B cell (primary cell): ENCODE measurements at regions of chr2 and their contacts with region 1.

Region 1: GRCh38 chr2:230552181-230552580 is 136.2 kb downstream of the SP100 start:
- DNase-seq: no peak
- ATAC-seq: no peak
- H3K4me3 ChIP-seq: no peak overlapping the region
- H3K4me3 Mint-ChIP-seq: no peak overlapping the region
- H3K27ac ChIP-seq: no peak overlapping the region
- H3K27ac Mint-ChIP-seq: peak overlapping the region; percentile 41
- H3K4me1 ChIP-seq: peaks cover 12% of the 10 kb centered on the region in 2 donors
- H3K4me1 Mint-ChIP-seq: peaks cover 24% of the 10 kb centered on the region
- H3K27me3 ChIP-seq: no peaks in the 10 kb centered on the region
- H3K27me3 Mint-ChIP-seq: no peaks in the 10 kb centered on the region
- CTCF ChIP-seq: no peak

Region 2: DNA sequence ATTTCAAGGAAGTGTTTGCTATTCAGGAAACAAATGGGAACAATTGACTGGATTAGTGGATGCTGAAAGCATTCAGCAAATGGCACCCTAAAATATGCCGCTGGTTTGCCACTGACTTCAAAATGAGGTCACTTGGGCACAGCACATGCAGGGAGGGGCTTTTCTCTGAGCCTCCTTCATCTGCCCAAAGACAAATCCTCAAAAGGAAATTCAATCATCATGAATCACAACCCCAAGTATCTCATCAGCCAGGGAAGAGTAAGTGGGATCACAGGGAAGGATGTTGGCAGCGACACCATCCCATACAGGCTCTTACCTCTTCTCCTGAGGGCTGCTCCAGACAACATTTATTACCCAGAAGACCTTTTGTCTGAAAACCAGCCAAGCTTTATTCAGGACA is 239.5 kb before region 1 on chr2:
- CTCF ChIA-PET with region 1: no interaction called
- POLR2A ChIA-PET with region 1: no interaction called
- intact Hi-C with region 1: no loop called
- DNase-seq: no peak
- ATAC-seq: no peak
- H3K4me3 ChIP-seq: no peak overlapping the region
- H3K4me3 Mint-ChIP-seq: no peak overlapping the region
- H3K27ac ChIP-seq: peak overlapping the region in 1 of 2 donors; percentile 17
- H3K27ac Mint-ChIP-seq: peak overlapping the region; percentile 32
- H3K4me1 ChIP-seq: peaks cover 6 to 20% of the 10 kb centered on the region in 2 donors
- H3K4me1 Mint-ChIP-seq: peaks cover 30% of the 10 kb centered on the region
- H3K27me3 ChIP-seq: no peaks in the 10 kb centered on the region
- H3K27me3 Mint-ChIP-seq: no peaks in the 10 kb centered on the region
- CTCF ChIP-seq: no peak

Region 3: GRCh38 chr2:230496891-230497290 is 55.3 kb before region 1 on chr2:
- CTCF ChIA-PET with region 1: no interaction called
- POLR2A ChIA-PET with region 1: no interaction called
- intact Hi-C with region 1: loop called (anchors 2 kb)
- DNase-seq: peak; percentile 32
- ATAC-seq: peak; percentile 68
- H3K4me3 ChIP-seq: peak overlapping the region in 2 of 5 experiments; percentile 19 to 57
- H3K4me3 Mint-ChIP-seq: peak overlapping the region; percentile 85
- H3K27ac ChIP-seq: peak overlapping the region; percentile 67 to 83
- H3K27ac Mint-ChIP-seq: peak overlapping the region; percentile 97
- H3K4me1 ChIP-seq: peaks cover 28 to 37% of the 10 kb centered on the region in 2 donors
- H3K4me1 Mint-ChIP-seq: peaks cover 58% of the 10 kb centered on the region
- H3K27me3 ChIP-seq: no peaks in the 10 kb centered on the region
- H3K27me3 Mint-ChIP-seq: no peaks in the 10 kb centered on the region
- CTCF ChIP-seq: no peak

Region 4: GRCh38 chr2:230512955-230513748 is 39.0 kb before region 1 on chr2:
- CTCF ChIA-PET with region 1: interaction called, 3 read pairs
- POLR2A ChIA-PET with region 1: no interaction called
- intact Hi-C with region 1: loop called (anchors 5 kb)
- DNase-seq: no peak
- ATAC-seq: no peak
- H3K4me3 ChIP-seq: no peak overlapping the region
- H3K4me3 Mint-ChIP-seq: no peak overlapping the region
- H3K27ac ChIP-seq: no peak overlapping the region
- H3K27ac Mint-ChIP-seq: peak overlapping the region; percentile 23
- H3K4me1 ChIP-seq: no peaks in the 10 kb centered on the region
- H3K4me1 Mint-ChIP-seq: peaks cover 7% of the 10 kb centered on the region
- H3K27me3 ChIP-seq: no peaks in the 10 kb centered on the region
- H3K27me3 Mint-ChIP-seq: no peaks in the 10 kb centered on the region
- CTCF ChIP-seq: no peak

Region 5: DNA sequence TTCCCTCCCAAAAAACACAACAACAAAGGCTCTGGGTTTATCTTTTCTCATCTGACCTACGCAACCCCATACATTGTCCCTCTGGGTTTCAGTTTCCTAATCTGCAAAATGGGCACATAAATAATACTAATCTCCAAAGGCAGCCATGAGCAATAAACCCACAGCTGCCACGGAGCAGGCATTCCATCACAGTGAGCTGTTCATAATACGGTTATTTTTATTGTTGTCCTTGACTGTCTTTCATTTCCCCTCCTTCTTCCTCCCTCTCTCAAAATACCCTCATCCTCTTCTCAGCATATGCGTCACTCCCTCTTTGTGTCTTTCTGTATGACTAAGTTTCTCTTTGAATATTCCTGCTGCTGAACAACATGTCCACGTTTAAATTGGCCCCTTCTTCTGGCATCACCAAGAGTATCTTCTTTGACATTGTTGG is 30.7 kb after region 1 on chr2:
- CTCF ChIA-PET with region 1: no interaction called
- POLR2A ChIA-PET with region 1: interaction called, 11 read pairs
- intact Hi-C with region 1: no loop called
- DNase-seq: peak; percentile 71
- ATAC-seq: peak; percentile 80
- H3K4me3 ChIP-seq: peak overlapping the region in 2 of 5 experiments; percentile 2 to 43
- H3K4me3 Mint-ChIP-seq: peak overlapping the region; percentile 67
- H3K27ac ChIP-seq: peak overlapping the region; percentile 62 to 77
- H3K27ac Mint-ChIP-seq: peak overlapping the region; percentile 86
- H3K4me1 ChIP-seq: peaks cover 32 to 42% of the 10 kb centered on the region in 2 donors
- H3K4me1 Mint-ChIP-seq: peaks cover 46% of the 10 kb centered on the region
- H3K27me3 ChIP-seq: no peaks in the 10 kb centered on the region
- H3K27me3 Mint-ChIP-seq: no peaks in the 10 kb centered on the region
- CTCF ChIP-seq: no peak